ENCODE measurements at regions of chr10 and their contacts with region 1.

Region 1: DNA sequence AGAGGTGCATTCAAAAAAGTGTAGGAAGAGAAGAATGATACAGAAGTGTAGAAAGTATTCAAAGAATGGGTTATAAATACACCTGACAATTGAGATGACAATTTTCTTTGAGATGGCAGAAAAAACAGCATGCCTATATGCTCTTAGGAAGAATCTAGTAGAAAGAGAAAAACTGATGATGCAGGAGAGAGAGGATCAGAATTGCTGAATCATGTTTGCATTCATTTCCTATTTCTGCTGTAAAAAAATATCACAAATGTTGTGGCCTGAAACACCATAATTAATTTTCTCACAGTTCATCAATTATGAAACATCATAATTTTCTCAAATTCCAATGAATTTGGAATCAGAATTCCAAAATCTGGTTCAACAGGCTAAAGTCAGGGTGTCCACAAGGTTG is 9.8 kb upstream of the AKR1C1 start:
- DNase-seq: no peak
- ATAC-seq: no peak
- H3K4me3 ChIP-seq: no peak overlapping the region
- H3K27ac ChIP-seq: no peak overlapping the region
- H3K4me1 ChIP-seq: peaks cover 0 to 8% (median 0%) of the 10 kb centered on the region in 12 donors
- H3K27me3 ChIP-seq: no peaks in the 10 kb centered on the region
- CTCF ChIP-seq: no peak
- POLR2A ChIP-seq: no peak

Region 2: GRCh38 chr10:5002013-5002727 is 48.8 kb after region 1 on chr10:
- intact Hi-C with region 1: loop called in 1 of 10 experiments (anchors 5 kb)
- DNase-seq: no peak
- ATAC-seq: no peak
- H3K4me3 ChIP-seq: peak overlapping the region in 9 of 12 donors; percentile 17 to 52 (median 32)
- H3K27ac ChIP-seq: no peak overlapping the region
- H3K4me1 ChIP-seq: no peaks in the 10 kb centered on the region
- H3K27me3 ChIP-seq: no peaks in the 10 kb centered on the region
- CTCF ChIP-seq: no peak
- POLR2A ChIP-seq: no peak

Region 3: DNA sequence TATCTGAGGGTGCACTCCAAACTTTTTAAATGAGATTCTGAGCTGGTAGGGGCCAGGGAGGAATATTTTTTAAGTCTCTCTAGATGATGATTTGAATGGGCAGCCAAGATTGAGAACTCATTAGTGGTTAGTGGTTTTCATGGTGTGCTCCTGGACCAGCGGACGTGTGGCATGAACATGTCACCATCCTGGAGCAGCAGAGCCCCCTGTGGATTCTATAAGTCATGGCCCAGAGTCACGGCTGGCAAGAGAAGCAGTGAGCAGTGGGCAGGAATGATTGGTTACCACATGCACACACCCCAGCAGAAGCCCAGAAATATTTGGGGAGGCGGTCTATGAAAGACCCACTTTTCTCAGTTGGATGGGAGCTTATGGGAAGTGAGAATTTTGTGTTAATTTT is 390.2 kb after region 1 on chr10:
- intact Hi-C with region 1: no loop called
- DNase-seq: no peak
- ATAC-seq: no peak
- H3K4me3 ChIP-seq: no peak overlapping the region
- H3K27ac ChIP-seq: no peak overlapping the region
- H3K4me1 ChIP-seq: no peaks in the 10 kb centered on the region
- H3K27me3 ChIP-seq: no peaks in the 10 kb centered on the region
- CTCF ChIP-seq: peak in 2 of 12 donors; percentile 12 to 20
- POLR2A ChIP-seq: no peak

Measured in heart left ventricle (tissue), 16 donors.